Right ventricle myocardium inferior (tissue), 1 donor: ENCODE measurements at regions of chr22 and their contacts with region 1.

Region 1: DNA sequence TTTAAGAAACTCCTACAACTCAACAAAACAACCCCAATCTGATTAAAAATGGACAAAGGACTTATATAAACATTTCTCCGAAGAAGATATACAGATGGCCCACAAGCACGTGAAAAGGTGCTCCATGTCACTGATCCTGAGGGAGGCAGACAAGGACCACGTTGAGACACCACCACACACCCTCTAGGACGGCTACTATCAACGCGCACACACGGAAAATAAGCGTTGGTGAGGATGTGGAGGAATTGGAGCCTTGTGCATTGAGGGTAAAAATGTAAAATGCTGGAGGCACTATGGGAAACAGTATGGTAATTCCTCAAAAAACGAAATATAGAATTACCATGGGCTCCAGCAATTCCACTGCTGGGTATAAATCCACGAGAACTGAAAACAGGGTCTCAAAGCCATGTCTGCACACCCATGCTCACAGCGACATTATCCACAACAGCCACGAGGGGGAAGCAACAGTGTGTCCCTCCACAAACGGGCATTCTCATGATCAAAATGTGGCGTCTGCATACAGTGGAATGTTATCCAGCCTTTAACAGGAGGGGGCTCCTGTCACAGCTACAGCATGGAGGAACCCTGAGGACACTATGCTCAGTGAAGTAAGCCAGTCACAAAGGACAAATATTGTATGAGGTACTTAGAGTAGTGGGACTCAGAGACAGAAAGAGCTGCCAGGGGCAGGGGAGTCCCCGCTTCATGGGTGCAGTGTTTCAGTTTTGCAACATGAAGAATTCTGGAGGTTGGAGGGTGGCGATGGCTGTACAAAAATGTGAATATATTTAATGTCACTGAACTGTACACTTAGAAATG is 22.5 kb downstream of the YPEL1 start:
- DNase-seq: no peak
- ATAC-seq: peak; percentile 93

Region 2: GRCh38 chr22:21579518-21580147 is 133.5 kb before region 1 on chr22:
- intact Hi-C with region 1: no loop called
- DNase-seq: no peak
- ATAC-seq: no peak

Region 3: DNA sequence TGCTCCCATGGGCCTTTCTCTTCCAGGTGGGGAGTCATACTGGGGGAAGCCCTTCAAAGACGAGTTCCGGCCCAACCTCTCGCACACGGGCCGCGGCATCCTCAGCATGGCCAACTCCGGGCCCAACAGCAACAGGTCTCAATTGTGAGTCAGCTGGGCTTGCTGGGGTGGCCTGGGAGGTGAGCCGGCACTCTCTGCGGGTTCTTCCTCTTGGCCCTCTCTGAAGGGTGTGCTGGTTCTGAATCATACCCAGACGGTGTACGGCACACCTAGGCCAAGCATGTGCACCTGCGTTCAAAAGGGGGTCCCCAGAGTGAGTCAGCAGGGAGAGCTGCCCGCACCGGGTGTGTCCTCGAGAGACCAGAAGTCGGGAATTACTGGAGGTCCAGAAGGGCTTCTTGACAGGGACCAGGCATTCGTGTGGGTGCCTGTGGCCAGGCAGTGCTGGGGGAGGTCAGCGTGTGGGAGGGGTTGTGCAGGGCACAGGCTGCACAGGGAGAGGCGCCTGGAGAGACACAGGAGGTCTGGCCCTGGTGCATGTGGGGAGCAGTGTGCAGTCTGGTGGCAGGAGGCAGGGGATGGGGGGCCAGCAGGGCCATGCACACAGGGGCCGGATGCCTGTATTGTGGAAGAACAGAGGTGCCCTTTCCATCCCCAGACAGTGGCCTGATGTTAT is 24.3 kb before region 1 on chr22:
- intact Hi-C with region 1: no loop called
- DNase-seq: no peak
- ATAC-seq: no peak

Region 4: DNA sequence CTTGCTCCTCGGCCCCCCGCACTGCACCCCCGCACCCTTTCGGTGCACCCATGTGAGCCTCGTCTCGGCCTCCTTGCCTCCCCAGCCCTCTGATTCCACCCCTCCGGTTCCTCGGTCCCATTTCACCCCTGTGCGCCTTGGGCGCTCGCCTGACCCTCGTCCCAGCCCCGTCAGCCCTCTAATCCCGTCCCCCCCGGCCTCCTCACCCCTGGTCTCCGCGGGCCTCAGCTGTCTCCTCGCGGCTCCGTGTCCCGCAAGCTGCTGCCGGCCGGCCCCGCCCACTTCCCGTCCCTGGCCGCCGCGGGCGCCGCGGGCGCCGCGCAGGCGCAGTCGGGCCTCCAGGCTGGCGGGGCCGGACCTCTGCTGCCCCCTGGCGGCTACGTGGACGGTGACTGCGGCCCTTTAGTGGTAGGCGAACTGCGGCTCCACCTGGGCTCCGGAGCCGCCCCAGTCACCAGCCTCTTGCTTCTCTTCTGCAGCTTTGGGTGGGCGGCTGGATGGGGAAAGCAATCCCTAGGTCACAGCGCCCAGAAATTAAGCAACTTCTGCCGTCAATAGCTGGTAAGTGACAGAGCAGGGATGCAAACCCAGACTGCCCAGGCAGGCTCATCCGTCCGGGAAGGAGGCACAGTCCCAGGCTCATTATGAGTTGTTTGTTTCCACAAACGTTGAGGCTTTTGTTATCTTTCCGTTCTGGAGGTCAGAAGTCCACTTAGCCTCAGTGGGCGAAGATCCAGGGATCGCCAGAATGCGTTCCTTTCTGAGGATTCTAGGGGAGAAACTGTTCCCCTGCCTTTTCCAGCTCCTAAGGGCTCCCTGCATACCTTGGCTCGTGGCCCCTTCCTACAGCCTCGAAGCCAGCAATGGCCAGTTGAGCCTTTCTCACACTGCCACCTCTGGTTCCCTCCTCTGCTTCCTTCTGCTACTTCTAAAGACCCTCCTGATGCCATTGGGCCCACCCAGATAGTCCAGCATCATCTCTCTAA is 239.8 kb after region 1 on chr22 and contains the start of gene PPM1F:
- intact Hi-C with region 1: loop called (anchors 2 kb)
- DNase-seq: peak; percentile 94
- ATAC-seq: peak; percentile 90
- total RNA-seq, gene PPM1F: 18.9 TPM